Astrocyte of the cerebellum (primary cell): ENCODE measurements at regions of chr15 and their contacts with region 1.

Region 1: DNA sequence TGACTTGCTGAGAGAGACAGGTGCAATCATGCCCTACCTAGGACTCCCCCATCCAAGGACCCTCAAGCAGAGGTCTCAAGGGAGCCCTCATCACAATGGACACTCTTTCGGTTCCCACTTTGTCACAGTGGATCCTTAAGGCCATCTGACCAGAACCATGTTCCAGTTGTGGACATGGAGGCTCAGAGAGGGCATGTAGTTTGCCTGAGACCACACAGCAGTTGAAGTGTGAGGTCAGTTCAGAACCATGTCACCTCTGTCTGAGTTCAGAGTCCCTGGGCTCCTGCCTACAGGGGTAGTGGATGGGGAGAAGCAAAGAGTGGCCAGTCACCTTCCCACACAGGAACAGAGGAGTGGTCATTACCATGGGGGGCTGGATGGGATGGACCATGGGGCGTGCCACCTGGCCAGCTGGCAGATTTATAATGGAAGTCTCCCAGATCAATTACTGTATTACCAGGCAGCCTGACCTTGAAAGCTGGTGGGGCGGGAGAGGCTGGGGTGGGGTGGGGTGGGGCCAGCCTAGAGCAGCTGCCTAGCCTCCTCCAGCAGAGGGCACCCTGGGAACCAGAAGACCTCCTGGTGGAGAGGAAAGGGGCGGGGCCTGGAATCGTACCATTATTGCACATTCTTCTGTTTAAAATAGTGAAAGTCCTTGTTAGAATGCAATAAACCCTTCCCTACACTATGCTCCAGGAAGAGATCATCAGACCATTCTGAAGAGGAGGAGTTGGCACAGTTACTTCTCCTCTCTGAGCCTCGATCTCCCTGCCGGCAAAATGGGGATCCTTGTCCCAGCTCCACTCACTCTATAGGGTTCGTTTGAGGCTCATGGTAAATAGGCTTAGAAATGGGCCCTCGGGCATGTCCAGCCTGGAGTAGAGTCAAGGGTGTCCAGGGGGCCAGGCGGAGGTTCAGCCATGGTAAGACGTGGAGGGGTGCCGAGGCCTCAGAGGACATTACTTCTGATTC is 26.9 kb upstream of the LINGO1 start:
- DNase-seq: no peak
- H3K4me3 ChIP-seq: no peak overlapping the region
- CTCF ChIP-seq: peak; percentile 19

Region 2: DNA sequence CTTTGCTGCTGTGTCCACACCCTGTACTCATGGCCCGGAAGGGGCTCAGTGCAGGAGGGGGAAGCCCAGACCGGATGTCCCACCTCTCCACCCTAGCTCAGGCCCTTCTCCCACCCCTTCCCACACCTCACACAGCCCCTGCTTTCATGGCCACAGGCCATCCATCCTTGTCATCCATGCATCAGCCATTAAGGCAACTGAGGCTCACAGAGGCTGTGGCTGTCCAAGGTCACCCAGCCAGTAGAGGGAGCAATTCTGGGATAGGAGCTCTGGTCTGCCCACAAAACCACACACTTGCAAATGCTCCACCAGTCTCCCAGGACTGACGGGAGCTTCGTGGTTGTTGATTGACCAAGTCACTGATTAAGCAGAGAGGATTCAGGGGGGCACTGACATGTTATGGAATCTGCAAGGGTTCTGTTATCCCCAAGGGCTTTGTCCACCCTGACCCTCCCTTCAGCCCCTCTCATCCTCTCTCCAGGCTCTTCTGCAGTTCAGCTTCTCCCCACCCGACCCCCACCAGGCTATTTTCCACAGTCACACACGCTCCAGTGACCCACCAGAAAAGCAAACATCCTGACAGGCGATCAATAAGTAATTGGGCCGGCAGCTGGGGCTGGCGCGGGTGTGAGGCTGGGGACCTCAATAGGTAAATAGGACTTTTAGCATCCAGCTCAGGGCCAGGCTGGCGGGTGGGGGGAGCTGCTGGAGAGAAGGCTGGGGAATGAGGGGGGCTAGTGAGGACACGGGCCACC is 42.0 kb before region 1 on chr15:
- in situ Hi-C with region 1: no loop called
- DNase-seq: no peak
- H3K4me3 ChIP-seq: no peak overlapping the region
- CTCF ChIP-seq: peak; percentile 33

Region 3: DNA sequence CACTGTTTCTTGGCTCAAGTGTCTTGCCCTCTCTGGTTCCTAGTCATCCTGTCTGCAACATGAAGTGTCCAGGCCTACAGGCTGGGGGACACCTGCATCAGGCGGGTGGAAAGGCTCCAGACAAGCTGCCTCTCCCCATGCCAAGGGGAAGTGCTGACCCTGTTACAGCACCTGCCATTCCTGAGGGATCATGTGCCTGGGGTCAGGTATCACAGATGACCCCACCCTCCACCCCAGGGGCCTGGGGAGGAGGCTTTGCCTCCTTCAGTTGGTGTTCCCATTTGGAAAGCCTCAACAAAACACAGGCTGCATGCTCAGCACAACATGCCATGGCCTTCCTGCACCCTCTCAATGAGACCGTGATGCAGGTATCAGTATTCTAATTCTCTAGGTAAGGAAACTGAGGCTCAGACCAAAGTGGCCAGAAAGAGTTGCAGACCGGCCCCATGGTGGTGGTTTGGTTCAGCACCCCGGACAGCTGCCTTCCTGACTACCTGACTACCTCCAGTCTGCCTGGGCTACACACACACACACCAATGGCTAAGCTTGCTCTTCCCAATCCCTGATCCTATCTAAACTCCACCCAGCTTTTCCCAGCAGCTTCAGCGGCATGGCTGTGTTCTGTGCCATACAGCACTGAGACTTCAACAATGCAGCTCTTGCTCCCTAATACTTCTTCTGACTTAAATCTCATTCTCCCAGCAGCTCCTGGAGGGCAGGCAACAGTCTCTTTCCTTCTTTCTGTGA is 42.7 kb after region 1 on chr15:
- in situ Hi-C with region 1: loop called (anchors 5 kb)
- DNase-seq: peak; percentile 11
- H3K4me3 ChIP-seq: no peak overlapping the region
- CTCF ChIP-seq: no peak

Region 4: DNA sequence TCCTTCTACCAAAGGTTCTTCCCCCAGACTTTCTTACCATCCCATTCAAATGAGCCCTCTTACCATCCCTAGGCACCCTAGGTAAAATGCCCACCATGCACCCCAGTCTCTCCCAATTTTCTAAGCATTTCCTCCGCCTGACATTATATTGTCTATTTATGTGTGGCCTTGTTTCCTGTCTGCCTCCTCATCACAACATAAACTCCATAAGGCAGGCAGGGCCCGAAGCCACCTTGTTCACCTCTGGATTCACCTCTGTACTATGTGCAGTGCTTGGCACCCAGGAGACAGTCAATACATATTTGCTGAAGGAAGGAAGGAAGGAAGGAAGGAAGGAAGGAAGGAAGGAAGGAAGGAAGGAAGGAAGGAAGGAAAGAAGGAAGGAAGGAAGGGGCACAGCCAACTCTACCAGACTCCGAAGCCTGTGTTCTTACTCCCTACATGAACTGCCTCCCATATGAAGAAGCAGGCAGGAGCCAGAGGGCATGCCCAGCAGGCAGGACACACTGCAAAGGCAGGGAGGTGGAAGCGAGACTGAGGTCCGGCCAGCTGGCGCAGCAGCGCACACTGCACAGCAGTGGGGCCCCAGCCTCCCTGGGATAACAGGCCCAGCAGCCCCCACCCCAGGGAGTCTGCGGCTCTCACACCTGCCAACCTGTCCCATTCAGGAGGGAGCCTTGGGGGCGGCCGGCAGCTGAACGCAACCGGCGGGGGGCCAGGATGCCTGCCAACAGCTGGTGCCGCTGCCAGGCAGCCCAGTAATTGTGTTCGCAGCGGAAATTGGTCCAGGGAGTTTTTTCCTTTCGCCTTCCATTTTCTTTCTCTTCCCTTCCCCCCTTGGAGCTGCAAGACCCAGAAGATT is 79.0 kb after region 1 on chr15:
- in situ Hi-C with region 1: loop called (anchors 5 kb)
- DNase-seq: no peak
- H3K4me3 ChIP-seq: no peak overlapping the region
- CTCF ChIP-seq: no peak

Region 5: DNA sequence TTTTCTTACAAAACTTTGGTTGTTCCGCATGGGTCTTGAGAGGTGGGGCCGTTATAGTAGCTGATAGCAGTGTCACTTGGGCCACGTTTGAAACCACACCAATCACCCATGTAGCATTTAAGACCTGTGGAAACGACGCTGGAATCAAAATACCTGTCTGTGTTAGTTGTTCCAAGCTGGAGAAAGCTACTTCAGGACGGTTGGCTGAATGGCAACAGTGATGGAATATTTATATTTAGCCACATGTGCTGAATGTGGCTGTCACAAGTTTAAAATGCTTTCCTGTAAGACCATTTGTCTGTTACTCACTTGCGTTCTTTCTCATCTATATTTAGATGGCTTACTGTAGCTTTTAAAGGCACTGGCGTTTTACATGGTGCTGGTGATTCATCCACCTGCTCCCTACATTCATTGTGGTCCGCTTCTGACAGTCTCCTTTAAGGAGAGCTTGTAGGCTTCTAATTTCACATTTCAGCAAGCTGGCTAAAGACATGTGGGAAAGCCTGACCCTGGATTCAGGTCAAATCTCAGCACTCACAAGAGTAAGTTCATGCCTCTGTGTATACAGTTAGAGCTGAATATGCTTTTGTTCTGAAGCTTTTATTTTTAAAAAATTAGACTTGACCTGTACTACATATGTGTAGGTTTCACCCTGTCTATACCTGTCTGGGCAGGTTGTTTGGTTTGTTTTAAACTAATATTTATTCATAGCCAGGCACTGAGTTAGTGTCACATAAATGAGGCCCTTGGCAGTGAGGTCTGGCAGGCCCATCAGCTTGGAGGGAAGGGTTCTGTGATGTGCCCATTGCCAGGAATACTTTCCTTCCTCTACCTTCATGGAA is 606.3 kb after region 1 on chr15:
- in situ Hi-C with region 1: no loop called
- DNase-seq: no peak
- H3K4me3 ChIP-seq: no peak overlapping the region
- CTCF ChIP-seq: no peak